Dorsolateral prefrontal cortex (tissue), 120 donors: ENCODE measurements at regions of chr7 and their contacts with region 1.

Region 1: DNA sequence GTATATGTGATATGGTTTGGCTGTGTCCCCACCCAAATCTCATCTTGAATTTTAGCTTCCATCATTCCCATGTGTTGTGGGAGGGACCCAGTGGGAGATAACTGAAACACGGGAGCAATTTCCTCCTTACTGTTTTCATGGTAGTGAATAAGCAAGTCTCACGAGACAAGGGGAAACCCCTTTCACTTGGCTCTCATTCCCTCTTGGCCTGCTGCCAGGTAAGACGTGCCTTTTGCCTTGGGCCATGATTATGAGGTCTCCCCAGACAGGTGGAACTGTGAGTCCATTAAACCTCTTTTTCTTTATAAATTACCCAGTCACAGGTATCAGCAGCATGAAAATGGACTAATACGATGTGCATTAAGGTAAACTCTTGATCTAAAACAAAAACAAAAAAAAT is 357.1 kb upstream of the AOAH start:
- DNase-seq: no peak
- H3K4me3 ChIP-seq: no peak overlapping the region
- H3K27ac ChIP-seq: peak overlapping the region in 11 of 59 donors; percentile 43 to 91 (median 82)
- H3K27me3 ChIP-seq: no peaks in the 10 kb centered on the region
- CTCF ChIP-seq: no peak

Region 2: GRCh38 chr7:36389371-36390198 is 691.9 kb before region 1 on chr7 and contains the start of gene ANLN:
- intact Hi-C with region 1: no loop called
- DNase-seq: peak; percentile 77 to 96 (median 88)
- H3K4me3 ChIP-seq: peak within 1 kb of the TSS; percentile 52 to 87 (median 72)
- H3K27ac ChIP-seq: peak within 1 kb of the TSS; percentile 53 to 95 (median 86)
- H3K27me3 ChIP-seq: peaks cover 0 to 7% (median 0%) of the 10 kb centered on the region in 45 donors
- CTCF ChIP-seq: peak in 11 of 56 donors; percentile 4 to 36 (median 20)
- total RNA-seq, gene ANLN: 26.6 to 509 (median 114) TPM

Region 3: DNA sequence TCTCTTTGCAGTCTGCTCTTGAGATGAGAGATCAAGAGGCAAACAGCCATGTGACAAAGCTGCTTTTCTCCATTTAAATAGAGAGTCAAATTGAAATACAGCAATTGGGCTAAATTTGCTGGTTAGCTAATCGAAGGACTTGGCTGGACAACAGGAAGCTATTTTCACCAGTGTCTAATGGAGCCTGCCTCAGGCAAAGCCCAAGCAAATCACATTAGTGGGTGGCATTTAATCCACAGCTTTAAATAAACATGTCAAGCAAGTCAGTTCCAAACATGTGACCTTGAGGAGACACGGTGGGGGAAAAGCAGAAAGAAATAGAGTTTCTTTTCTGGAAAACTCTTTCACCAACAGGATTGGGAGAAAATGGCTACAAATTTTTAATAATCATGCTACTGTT is 176.6 kb before region 1 on chr7:
- intact Hi-C with region 1: no loop called
- DNase-seq: no peak
- H3K4me3 ChIP-seq: no peak overlapping the region
- H3K27ac ChIP-seq: peak overlapping the region in 1 of 59 donors; percentile 5
- H3K27me3 ChIP-seq: no peaks in the 10 kb centered on the region
- CTCF ChIP-seq: no peak

Region 4: GRCh38 chr7:36986429-36987362 is 94.7 kb before region 1 on chr7:
- intact Hi-C with region 1: loop called in 1 of 2 experiments (anchors 10 kb)
- DNase-seq: peak; percentile 59 to 89 (median 76)
- H3K4me3 ChIP-seq: peak overlapping the region in 58 of 59 donors; percentile 3 to 70 (median 55)
- H3K27ac ChIP-seq: peak overlapping the region in 51 of 59 donors; percentile 5 to 85 (median 62)
- H3K27me3 ChIP-seq: no peaks in the 10 kb centered on the region
- CTCF ChIP-seq: peak; percentile 44 to 97 (median 86)

Region 5: GRCh38 chr7:37031571-37032257 is 49.7 kb before region 1 on chr7:
- intact Hi-C with region 1: loop called in 1 of 2 experiments (anchors 1 kb)
- DNase-seq: peak in 8 of 10 donors; percentile 18 to 87 (median 52)
- H3K4me3 ChIP-seq: no peak overlapping the region
- H3K27ac ChIP-seq: peak overlapping the region; percentile 18 to 97 (median 88)
- H3K27me3 ChIP-seq: no peaks in the 10 kb centered on the region
- CTCF ChIP-seq: peak in 2 of 56 donors; percentile 17 to 23

Region 6: DNA sequence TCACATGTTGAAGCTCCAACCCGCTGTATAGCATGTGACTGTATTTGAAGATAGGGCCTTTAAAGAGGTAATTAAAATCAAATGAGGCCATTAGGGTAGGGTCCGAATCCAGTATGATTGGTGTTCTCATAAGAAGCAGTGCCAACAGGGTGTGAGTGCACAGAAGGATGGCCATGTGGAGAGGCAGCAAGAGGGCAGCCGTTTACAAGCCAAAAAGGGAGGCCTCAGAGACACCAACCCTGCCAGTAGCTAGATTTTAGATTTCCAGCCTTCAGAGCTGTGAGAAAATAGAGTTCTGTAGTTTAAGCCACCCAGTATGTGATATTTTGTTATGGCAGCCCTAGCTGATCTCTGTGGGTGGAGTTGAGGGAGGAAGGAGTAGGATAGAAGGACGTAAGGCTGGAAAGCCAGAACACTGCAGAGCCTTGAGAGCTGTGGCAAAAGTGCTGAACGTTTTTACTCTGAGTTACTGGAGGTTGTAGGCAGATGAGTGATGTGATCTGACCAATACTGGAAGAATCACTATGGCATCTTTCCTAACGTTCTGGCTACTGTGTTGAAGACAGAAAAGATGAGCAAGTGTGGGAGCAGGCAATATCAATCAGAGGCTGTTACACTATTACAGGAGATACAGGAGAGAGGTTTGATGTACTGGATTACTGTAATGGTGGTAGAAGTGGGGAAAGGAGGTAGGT is 32.4 kb after region 1 on chr7:
- intact Hi-C with region 1: no loop called
- DNase-seq: peak in 1 of 10 donors; percentile 37
- H3K4me3 ChIP-seq: no peak overlapping the region
- H3K27ac ChIP-seq: peak overlapping the region in 4 of 59 donors; percentile 11 to 58 (median 30)
- H3K27me3 ChIP-seq: no peaks in the 10 kb centered on the region
- CTCF ChIP-seq: no peak